HCT116 (cell line): ENCODE measurements at regions of chr12 and their contacts with region 1.

Region 1: DNA sequence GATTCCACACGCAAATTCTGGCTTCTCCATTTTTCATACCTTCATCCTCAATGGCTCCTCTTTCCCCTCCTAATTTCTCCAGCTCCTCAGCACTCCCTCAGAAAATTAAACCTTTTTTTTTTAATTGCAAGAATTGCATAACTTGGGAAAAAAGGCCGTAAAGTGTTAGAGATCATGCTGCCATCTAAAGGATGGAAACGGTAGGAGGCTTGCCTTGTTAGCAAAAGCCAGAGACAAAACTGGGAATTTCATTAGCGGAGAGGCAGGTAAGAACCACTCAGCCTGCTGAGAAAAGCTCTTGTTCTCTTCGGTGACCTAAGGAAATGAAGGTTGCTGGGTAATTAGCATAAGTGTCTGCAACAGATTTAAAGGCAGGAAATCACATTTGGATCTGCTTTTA is 204.3 kb downstream of the AEBP2 start:
- DNase-seq: peak; percentile 39
- ATAC-seq: peak; percentile 77
- H3K4me3 ChIP-seq: no peak overlapping the region
- H3K27ac ChIP-seq: no peak overlapping the region
- H3K4me1 ChIP-seq: no peaks in the 10 kb centered on the region
- H3K27me3 ChIP-seq: no peaks in the 10 kb centered on the region
- CTCF ChIP-seq: peak; percentile 24 to 60 (median 55); a peak in 5 of 6 replicates
- POLR2A ChIP-seq: no peak
- RAD21 ChIP-seq: peak; percentile 60

Region 2: DNA sequence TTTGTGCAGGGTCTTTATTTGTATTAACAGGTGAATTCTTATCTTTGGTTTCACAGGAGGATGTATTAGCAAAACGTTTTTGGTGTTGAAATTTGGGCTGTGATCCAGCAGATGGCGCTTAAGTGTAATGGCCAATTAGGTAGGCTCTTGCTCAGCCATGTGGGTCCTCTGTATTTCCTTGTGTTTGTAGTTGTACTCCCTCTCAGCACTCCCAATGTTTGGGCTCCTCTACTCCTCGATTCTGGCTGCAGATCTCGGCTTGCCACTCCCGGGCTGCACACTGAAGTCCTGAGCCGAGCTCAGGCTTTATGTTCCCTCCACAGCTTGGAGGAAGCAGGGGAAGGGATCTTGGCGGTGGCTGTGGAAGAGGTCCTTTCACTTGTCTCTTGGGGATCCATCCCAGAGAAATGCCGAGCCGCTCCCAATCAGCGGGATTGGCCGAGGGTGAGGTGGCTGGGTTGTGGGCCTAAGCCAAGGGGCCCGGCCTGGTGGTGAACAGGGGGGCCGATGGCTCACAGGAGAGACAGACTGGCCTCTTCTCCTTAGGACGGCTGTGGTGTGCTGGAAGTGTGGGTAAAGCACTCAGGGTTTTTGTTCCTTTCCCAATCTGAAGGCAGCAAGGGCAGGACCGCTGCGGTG is 70.6 kb before region 1 on chr12:
- CTCF ChIA-PET with region 1: no interaction called
- POLR2A ChIA-PET with region 1: no interaction called
- RAD21 ChIA-PET with region 1: no interaction called
- intact Hi-C with region 1: loop called (anchors 5 kb)
- DNase-seq: peak; percentile 32
- ATAC-seq: peak; percentile 86
- H3K4me3 ChIP-seq: no peak overlapping the region
- H3K27ac ChIP-seq: no peak overlapping the region
- H3K4me1 ChIP-seq: peaks cover 3 to 7% of the 10 kb centered on the region in 2 experiments; a peak in 3 of 4 replicates
- H3K27me3 ChIP-seq: no peaks in the 10 kb centered on the region
- CTCF ChIP-seq: peak; percentile 34 to 74 (median 71); a peak in 5 of 6 replicates
- POLR2A ChIP-seq: no peak
- RAD21 ChIP-seq: peak; percentile 57

Region 3: GRCh38 chr12:19654650-19655376 is 11.2 kb after region 1 on chr12:
- CTCF ChIA-PET with region 1: no interaction called
- POLR2A ChIA-PET with region 1: no interaction called
- RAD21 ChIA-PET with region 1: no interaction called
- intact Hi-C with region 1: no loop called
- DNase-seq: no peak
- ATAC-seq: no peak
- H3K4me3 ChIP-seq: no peak overlapping the region
- H3K27ac ChIP-seq: no peak overlapping the region
- H3K4me1 ChIP-seq: no peaks in the 10 kb centered on the region
- H3K27me3 ChIP-seq: no peaks in the 10 kb centered on the region
- CTCF ChIP-seq: no peak
- POLR2A ChIP-seq: no peak
- RAD21 ChIP-seq: no peak